ENCODE measurements at regions of chr1 and their contacts with region 1.

Region 1: DNA sequence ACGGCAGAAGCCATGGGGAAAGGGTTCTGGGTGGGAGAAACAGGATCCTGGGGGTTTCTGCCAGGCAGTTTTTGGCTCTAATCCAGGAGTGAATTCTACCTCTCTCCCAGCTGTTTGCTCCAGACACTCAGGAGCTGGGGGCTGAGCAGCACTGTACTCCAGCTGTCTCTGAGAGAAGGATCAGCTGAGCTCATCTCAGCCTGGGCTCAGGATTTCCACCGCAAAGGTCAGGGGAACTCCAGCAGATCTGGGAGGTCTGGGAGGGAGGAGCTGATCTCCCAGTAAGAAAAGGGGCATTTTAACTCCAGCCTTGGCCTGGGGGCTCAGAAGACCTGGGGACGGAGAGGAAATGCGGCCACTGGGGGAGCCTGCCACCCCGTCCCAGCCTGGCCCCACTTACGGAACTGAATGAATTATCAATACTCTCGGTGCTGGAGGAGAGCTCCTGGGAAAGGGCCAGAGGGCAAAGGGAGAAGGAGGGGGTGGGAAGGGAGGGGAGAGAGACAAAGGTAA is 17.3 kb downstream of the PI4KB start:
- DNase-seq: peak; percentile 45
- ATAC-seq: peak in 1 of 2 donors; percentile 48

Region 2: DNA sequence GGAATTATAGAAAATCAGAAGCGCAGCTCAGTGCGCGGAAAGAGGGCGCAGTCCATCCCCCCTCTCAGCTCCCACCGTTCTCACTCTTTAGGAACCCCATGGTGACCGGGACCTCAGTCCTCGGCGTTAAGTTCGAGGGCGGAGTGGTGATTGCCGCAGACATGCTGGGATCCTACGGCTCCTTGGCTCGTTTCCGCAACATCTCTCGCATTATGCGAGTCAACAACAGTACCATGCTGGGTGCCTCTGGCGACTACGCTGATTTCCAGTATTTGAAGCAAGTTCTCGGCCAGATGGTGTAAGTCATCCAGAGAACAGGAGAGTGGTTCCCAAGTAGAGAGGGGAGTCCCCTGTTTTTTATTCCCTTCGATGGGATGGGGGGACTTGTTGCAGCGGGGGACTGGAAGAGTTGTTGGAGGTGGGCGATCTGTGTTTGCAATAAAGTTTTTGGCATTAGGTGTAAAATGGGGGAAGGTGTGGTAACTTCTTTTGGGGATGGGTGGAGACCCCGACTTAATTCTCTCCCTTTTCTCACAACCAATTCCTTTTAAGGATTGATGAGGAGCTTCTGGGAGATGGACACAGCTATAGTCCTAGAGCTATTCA is 90.1 kb after region 1 on chr1:
- intact Hi-C with region 1: loop called in 1 of 2 experiments (anchors 10 kb)
- DNase-seq: no peak
- ATAC-seq: peak; percentile 22 to 31